ENCODE measurements at regions of chr15 and their contacts with region 1.

Region 1: GRCh38 chr15:88701561-88702095 is 62.8 kb downstream of the ISG20 start:
- DNase-seq: peak; percentile 65
- CTCF ChIP-seq: peak; percentile 58

Region 2: DNA sequence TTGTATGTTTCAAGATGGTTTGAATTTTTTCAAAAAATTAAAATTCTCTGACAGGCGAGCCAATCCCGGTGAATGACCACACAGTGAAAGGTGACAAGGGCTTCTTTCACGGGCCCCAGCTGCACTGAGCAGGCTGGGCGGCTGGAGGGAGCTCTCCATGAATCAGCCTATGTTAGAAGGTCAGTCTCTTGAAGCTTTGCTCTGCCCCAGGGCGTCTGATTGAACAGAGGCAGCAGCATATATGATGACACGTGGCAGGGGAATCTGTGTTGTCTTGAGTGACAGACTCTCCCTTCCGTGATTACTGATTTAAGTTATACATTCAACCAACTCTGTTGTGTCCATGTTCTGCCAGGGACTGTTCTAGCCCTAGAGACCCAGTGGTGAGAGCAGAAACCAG is 11.3 kb before region 1 on chr15:
- CTCF ChIA-PET with region 1: interaction called, 11 read pairs
- POLR2A ChIA-PET with region 1: no interaction called
- DNase-seq: no peak
- CTCF ChIP-seq: no peak

Region 3: DNA sequence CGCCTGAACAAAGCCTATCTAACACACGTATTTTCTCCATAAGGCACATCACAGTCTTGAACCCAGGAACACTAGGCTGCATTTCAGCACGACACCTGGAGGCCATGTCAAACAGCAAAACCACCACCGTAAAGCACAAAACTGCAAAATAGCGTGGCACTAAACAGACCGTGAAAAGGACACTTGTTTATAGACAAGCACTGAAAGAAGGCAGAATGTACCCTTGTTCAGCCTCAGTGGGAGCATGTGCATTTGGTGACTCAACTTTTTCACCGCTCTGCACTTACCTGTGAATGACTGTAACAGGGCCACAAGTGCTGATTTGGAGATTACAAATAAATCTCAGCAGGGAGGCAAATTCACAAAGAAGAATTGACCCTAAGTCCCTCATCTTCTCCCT is 18.0 kb after region 1 on chr15:
- CTCF ChIA-PET with region 1: no interaction called
- POLR2A ChIA-PET with region 1: no interaction called
- DNase-seq: no peak
- CTCF ChIP-seq: no peak

Region 4: DNA sequence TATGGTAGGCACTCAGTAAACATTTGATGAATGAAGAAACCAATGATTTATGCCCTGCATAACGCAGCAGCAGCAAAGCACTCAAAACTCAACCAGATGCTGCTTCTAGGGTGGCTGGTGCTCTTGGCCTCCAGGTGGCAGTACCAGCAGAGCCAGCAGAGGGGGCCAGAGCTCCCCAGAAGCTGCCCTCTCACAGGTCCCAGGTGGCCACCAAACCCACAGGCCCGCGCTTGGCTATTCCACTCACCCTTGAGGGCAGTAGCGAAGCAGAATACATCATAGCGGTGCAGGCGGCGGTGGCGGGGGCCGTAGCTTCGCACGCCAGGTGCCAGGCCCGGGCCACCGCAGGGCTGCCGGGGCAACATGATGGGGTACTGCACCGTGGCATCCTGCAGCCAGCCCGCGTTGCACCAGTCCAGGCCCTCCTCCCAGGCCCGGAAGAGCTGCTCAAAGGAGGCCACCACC is 177.1 kb after region 1 on chr15:
- CTCF ChIA-PET with region 1: no interaction called
- POLR2A ChIA-PET with region 1: no interaction called
- DNase-seq: peak; percentile 77
- CTCF ChIP-seq: peak; percentile 61